Dendritic cell treated with granulocyte-macrophage colony-stimulating factor and Interleukin-4, amounts not matched to agents 40 ng/mL and 50 ng/mL, for 4 days (primary cell): ENCODE measurements at regions of chr7 and their contacts with region 1.

Region 1: GRCh38 chr7:36107926-36108631 is 45.0 kb upstream of the EEPD1 start:
- H3K4me3 Mint-ChIP-seq: no peak overlapping the region
- H3K27ac Mint-ChIP-seq: no peak overlapping the region
- H3K4me1 Mint-ChIP-seq: peaks cover 6% of the 10 kb centered on the region
- H3K27me3 Mint-ChIP-seq: peaks cover 13% of the 10 kb centered on the region

Region 2: DNA sequence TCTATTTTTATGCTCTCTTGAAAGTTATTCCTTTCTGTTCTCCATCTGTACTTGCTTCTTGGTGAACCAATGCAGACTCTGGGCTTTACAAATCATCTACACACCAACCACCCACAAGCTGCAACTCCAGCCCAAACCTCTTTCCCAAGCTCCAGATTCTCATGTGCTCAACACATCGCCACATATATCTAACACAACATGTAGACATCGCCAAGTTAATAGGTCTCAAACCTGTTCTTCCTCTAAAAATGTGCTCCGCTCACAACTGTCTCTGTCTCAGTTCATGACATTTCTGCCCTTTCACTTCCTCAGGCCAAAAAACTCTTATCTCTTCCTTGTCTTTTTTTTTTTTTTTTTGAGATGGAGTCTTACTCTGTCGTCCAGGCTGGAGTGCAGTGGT is 50.8 kb before region 1 on chr7:
- intact Hi-C with region 1: no loop called
- H3K4me3 Mint-ChIP-seq: no peak overlapping the region
- H3K27ac Mint-ChIP-seq: no peak overlapping the region
- H3K4me1 Mint-ChIP-seq: peaks cover 28% of the 10 kb centered on the region
- H3K27me3 Mint-ChIP-seq: peaks cover 17% of the 10 kb centered on the region

Region 3: DNA sequence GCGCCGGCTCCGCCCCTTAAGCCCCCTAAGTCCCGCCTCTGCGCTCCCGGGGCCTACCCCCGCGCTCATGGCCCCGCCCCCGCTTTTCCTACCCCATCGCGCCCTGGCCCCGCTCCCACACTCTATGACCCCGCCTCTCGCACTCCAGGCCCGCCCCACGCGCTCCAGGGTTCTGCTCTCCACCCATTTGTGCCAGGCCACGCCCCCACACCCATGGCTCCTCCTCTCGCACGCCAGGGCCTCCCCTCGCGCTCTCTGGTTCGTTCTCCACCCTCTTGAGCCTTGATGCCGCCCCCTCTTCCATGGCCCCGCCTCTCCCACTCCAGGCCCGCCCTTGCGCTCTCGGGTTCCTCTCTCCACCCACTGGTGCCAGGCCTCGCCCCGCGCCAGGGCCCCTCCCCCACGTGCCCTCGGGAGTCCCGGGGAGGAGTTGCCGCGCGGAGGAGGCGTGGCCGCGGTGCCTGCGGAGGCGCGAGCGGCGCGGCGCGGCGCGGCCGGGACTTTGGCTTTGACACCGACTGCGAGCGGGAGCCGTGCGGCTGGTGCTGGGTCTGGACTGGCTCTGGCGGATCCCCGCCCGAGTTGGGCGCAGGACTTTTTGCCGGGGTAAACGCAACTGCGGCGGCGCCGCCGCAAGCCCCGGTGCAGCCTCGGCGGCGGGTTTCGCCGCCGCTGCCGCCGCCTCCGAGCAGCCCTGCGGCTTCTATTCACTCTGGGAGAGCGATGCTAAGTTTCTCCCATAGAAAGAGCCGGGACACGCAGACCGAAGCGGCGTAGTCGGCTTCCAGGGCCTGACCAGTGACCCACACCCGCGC is 44.9 kb after region 1 on chr7 and contains the start of gene EEPD1:
- intact Hi-C with region 1: loop called (anchors 1 kb)
- H3K4me3 Mint-ChIP-seq: peak within 1 kb of the TSS; percentile 88
- H3K27ac Mint-ChIP-seq: peak within 1 kb of the TSS; percentile 89
- H3K4me1 Mint-ChIP-seq: peaks cover 71% of the 10 kb centered on the region
- H3K27me3 Mint-ChIP-seq: no peaks in the 10 kb centered on the region